ENCODE measurements at regions of chr4 and their contacts with region 1.

Region 1: GRCh38 chr4:51895813-51896408 is 53.0 kb downstream of the DCUN1D4 start:
- DNase-seq: peak; percentile 34
- ATAC-seq: peak; percentile 100
- H3K4me3 ChIP-seq: no peak overlapping the region
- H3K27ac ChIP-seq: peak overlapping the region; percentile 66
- H3K4me1 ChIP-seq: peaks cover 10% of the 10 kb centered on the region; the same call in 1 of the 2 replicates
- H3K27me3 ChIP-seq: no peaks in the 10 kb centered on the region
- CTCF ChIP-seq: peak; percentile 82 to 88 (median 87)
- EP300 ChIP-seq: no peak
- POLR2A ChIP-seq: no peak
- RAD21 ChIP-seq: peak; percentile 66

Region 2: DNA sequence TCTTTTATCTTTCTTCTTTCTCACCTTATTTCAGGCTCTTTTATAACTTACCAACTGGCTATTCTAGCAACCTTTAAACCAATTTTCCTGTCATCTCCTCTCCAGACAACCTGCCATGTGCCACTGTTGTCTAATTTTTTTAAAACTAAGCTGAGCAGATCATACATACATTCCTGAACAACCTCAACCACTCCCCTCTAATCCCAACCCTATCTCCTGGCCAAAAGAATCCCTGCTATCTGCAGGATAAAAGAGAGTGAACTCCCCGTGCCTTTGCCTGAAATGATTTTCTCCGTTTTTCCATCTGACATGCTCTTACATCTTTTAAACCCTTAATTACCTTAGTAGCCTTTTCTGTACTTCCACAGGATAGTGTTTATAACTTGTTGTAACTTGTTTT is 17.5 kb before region 1 on chr4:
- CTCF ChIA-PET with region 1: interaction called, 10 read pairs
- POLR2A ChIA-PET with region 1: no interaction called
- RAD21 ChIA-PET with region 1: no interaction called
- SMC1A ChIA-PET with region 1: interaction called, 3 read pairs
- in situ Hi-C with region 1: no loop called
- intact Hi-C with region 1: no loop called
- DNase-seq: no peak
- ATAC-seq: no peak
- H3K4me3 ChIP-seq: no peak overlapping the region
- H3K27ac ChIP-seq: no peak overlapping the region
- H3K4me1 ChIP-seq: no peaks in the 10 kb centered on the region
- H3K27me3 ChIP-seq: no peaks in the 10 kb centered on the region
- CTCF ChIP-seq: no peak
- EP300 ChIP-seq: no peak
- POLR2A ChIP-seq: no peak
- RAD21 ChIP-seq: no peak

Region 3: GRCh38 chr4:51885363-51885762 is 10.5 kb before region 1 on chr4:
- CTCF ChIA-PET with region 1: interaction called, 11 read pairs
- POLR2A ChIA-PET with region 1: no interaction called
- RAD21 ChIA-PET with region 1: no interaction called
- SMC1A ChIA-PET with region 1: interaction called, 3 read pairs
- in situ Hi-C with region 1: no loop called
- intact Hi-C with region 1: no loop called
- DNase-seq: no peak
- ATAC-seq: peak; percentile 70
- H3K4me3 ChIP-seq: no peak overlapping the region
- H3K27ac ChIP-seq: no peak overlapping the region
- H3K4me1 ChIP-seq: no peaks in the 10 kb centered on the region
- H3K27me3 ChIP-seq: no peaks in the 10 kb centered on the region
- CTCF ChIP-seq: peak; percentile 30 to 48 (median 43); a peak in 3 of 6 replicates
- EP300 ChIP-seq: no peak
- POLR2A ChIP-seq: no peak
- RAD21 ChIP-seq: peak; percentile 13; the same call in 1 of the 2 replicates

Region 4: GRCh38 chr4:51906167-51906958 is 10.5 kb after region 1 on chr4:
- CTCF ChIA-PET with region 1: interaction called, 27 read pairs
- POLR2A ChIA-PET with region 1: interaction called, 3 read pairs
- RAD21 ChIA-PET with region 1: interaction called, 4 read pairs
- SMC1A ChIA-PET with region 1: interaction called, 19 read pairs
- in situ Hi-C with region 1: no loop called
- intact Hi-C with region 1: no loop called
- DNase-seq: peak; percentile 69
- ATAC-seq: peak; percentile 98
- H3K4me3 ChIP-seq: no peak overlapping the region
- H3K27ac ChIP-seq: no peak overlapping the region
- H3K4me1 ChIP-seq: peaks cover 16% of the 10 kb centered on the region
- H3K27me3 ChIP-seq: no peaks in the 10 kb centered on the region
- CTCF ChIP-seq: no peak
- EP300 ChIP-seq: peak; percentile 52 to 87
- POLR2A ChIP-seq: no peak
- RAD21 ChIP-seq: no peak

Region 5: DNA sequence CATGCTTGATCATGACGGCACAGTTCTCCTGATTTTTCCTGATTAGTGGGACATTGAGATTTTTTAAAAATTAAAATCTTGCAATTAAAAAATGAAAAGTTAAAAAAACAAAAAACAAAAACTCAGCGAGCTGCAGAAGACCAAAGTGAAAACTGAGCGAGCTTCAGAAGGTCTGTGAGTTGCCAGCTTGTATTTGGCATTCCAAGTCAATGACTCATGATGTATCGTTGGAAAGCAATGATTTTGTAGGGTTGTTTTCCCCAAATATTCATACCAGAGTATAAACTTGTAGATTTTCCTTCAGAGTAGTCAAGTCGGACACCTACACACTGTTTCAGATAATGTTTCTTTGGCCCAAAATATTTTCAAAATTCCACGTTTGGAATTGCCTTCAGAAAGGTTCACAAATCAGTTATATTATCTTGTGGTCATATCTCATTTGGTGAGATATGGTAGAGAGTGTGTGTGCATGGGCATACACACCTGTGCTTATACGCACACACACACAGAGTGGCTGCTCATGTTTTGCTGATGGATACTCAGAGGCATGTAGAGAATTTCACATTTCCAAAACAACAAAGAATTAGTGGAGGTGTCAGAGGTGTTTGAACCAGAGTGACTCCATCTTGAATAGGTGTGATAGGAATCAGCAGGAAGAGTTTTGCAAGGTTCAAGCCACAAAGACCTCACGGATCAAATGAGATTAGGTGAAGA is 47.5 kb after region 1 on chr4:
- CTCF ChIA-PET with region 1: no interaction called
- POLR2A ChIA-PET with region 1: no interaction called
- RAD21 ChIA-PET with region 1: no interaction called
- SMC1A ChIA-PET with region 1: no interaction called
- in situ Hi-C with region 1: no loop called
- intact Hi-C with region 1: no loop called
- DNase-seq: no peak
- ATAC-seq: no peak
- H3K4me3 ChIP-seq: no peak overlapping the region
- H3K27ac ChIP-seq: no peak overlapping the region
- H3K4me1 ChIP-seq: no peaks in the 10 kb centered on the region
- H3K27me3 ChIP-seq: no peaks in the 10 kb centered on the region
- CTCF ChIP-seq: no peak
- EP300 ChIP-seq: no peak
- POLR2A ChIP-seq: no peak
- RAD21 ChIP-seq: no peak

Region 6: DNA sequence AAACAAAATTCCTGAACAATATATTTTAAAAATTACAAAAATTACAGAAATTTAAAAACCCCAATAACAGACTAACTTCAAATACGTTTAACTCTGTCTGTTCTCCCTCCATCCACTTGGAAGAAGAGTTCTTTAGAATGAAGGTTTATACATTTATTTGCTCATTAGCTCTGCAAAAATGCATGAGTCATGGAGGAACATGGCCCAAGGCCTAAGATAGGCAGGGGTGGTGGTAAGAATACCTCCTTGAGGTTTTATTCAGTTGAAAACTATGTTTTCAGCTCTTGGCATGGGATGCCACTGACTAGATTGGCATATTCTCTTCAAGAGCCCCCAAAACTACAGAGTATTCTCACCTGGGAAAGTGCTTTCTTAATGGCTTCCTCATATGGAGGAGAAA is 133.1 kb after region 1 on chr4:
- CTCF ChIA-PET with region 1: interaction called, 11 read pairs
- POLR2A ChIA-PET with region 1: no interaction called
- RAD21 ChIA-PET with region 1: interaction called, 4 read pairs
- SMC1A ChIA-PET with region 1: no interaction called
- in situ Hi-C with region 1: loop called (anchors 5 kb)
- intact Hi-C with region 1: loop called (anchors 1 kb)
- DNase-seq: no peak
- ATAC-seq: no peak
- H3K4me3 ChIP-seq: no peak overlapping the region
- H3K27ac ChIP-seq: no peak overlapping the region
- H3K4me1 ChIP-seq: no peaks in the 10 kb centered on the region
- H3K27me3 ChIP-seq: no peaks in the 10 kb centered on the region
- CTCF ChIP-seq: no peak
- EP300 ChIP-seq: no peak
- POLR2A ChIP-seq: no peak
- RAD21 ChIP-seq: no peak

Measured in GM12878 (cell line).